HCT116 (cell line): ENCODE measurements at regions of chr1 and their contacts with region 1.

Region 1: DNA sequence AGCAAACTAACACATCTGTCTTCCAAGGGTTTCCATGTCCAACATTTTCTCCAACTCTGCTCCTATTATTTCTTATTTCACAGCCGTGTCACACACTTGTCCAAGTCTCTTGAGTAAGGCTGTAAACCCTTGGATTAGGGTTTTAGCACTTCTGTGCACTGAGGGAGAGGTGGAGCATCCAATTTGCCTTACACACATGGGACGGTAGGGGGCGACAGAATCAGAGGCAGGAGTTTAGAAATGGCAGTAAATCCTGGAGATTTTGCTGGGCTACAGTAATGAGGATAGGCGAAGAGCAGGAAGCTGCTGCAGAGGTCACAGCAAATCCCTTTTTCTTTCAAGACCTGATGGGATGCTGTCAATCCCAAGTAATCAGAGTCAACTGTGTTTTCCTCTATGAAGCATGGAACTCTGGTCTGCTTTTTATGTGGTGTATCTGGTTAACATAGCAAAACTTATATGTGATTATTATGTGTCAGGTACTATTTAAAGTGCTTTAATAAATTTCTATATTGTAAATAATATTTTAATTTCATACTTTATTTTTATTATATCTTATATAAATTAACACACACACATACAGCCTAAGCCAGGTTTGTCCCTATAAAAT is 15.4 kb upstream of the LCE5A start:
- DNase-seq: no peak
- ATAC-seq: peak; percentile 84
- H3K4me3 ChIP-seq: no peak overlapping the region
- H3K27ac ChIP-seq: no peak overlapping the region
- H3K4me1 ChIP-seq: no peaks in the 10 kb centered on the region
- H3K27me3 ChIP-seq: no peaks in the 10 kb centered on the region
- CTCF ChIP-seq: peak; percentile 44 to 78 (median 71); a peak in 5 of 6 replicates
- POLR2A ChIP-seq: no peak
- RAD21 ChIP-seq: peak; percentile 43; the same call in 1 of the 2 replicates

Region 2: GRCh38 chr1:152479792-152480595 is 15.2 kb before region 1 on chr1:
- CTCF ChIA-PET with region 1: interaction called, 11 read pairs
- POLR2A ChIA-PET with region 1: no interaction called
- RAD21 ChIA-PET with region 1: no interaction called
- intact Hi-C with region 1: no loop called
- DNase-seq: peak; percentile 63
- ATAC-seq: peak; percentile 100
- H3K4me3 ChIP-seq: no peak overlapping the region
- H3K27ac ChIP-seq: no peak overlapping the region
- H3K4me1 ChIP-seq: 0 out of 4 replicates have a peak, but pooled peaks cover 0 to 3% of the 10 kb centered on the region in 2 experiments
- H3K27me3 ChIP-seq: no peaks in the 10 kb centered on the region
- CTCF ChIP-seq: peak; percentile 34 to 88 (median 68); a peak in 5 of 6 replicates
- POLR2A ChIP-seq: no peak
- RAD21 ChIP-seq: 0 out of 2 replicates have a peak, but pooled peaks have one; percentile 8

Region 3: GRCh38 chr1:152533327-152533938 is 38.3 kb after region 1 on chr1:
- CTCF ChIA-PET with region 1: interaction called, 23 read pairs
- POLR2A ChIA-PET with region 1: no interaction called
- RAD21 ChIA-PET with region 1: no interaction called
- intact Hi-C with region 1: loop called (anchors 1 kb)
- DNase-seq: peak; percentile 56
- ATAC-seq: peak; percentile 87
- H3K4me3 ChIP-seq: no peak overlapping the region
- H3K27ac ChIP-seq: no peak overlapping the region
- H3K4me1 ChIP-seq: no peaks in the 10 kb centered on the region
- H3K27me3 ChIP-seq: no peaks in the 10 kb centered on the region
- CTCF ChIP-seq: peak; percentile 86 to 91 (median 88)
- POLR2A ChIP-seq: no peak
- RAD21 ChIP-seq: peak; percentile 84

Region 4: DNA sequence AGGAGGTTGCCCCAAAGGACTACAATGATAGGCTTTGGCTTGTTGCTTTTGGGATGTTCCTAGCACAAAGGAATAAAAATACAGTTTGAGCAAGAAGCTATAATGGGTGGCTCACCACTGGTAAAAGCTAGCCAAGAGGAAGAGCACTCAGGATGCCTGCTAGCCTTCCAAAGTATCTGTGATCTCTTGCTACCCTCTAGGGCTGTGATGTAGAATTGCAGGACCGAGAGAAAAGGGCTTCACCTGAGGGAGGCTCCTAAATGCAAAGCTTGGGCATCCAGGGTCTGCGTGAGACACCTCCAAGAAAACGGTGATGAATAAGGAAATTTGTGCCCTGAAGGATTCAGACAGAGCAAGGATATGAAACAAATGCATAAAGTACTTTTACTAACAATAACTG is 430.9 kb after region 1 on chr1:
- CTCF ChIA-PET with region 1: interaction called, 3 read pairs
- POLR2A ChIA-PET with region 1: no interaction called
- RAD21 ChIA-PET with region 1: no interaction called
- intact Hi-C with region 1: loop called (anchors 5 kb)
- DNase-seq: peak; percentile 24
- ATAC-seq: peak; percentile 83
- H3K4me3 ChIP-seq: no peak overlapping the region
- H3K27ac ChIP-seq: no peak overlapping the region
- H3K4me1 ChIP-seq: no peaks in the 10 kb centered on the region
- H3K27me3 ChIP-seq: peaks cover 19% of the 10 kb centered on the region
- CTCF ChIP-seq: peak; percentile 53 to 64 (median 62); a peak in 4 of 6 replicates
- POLR2A ChIP-seq: no peak
- RAD21 ChIP-seq: peak; percentile 76